ENCODE measurements at regions of chrX and their contacts with region 1.

Region 1: DNA sequence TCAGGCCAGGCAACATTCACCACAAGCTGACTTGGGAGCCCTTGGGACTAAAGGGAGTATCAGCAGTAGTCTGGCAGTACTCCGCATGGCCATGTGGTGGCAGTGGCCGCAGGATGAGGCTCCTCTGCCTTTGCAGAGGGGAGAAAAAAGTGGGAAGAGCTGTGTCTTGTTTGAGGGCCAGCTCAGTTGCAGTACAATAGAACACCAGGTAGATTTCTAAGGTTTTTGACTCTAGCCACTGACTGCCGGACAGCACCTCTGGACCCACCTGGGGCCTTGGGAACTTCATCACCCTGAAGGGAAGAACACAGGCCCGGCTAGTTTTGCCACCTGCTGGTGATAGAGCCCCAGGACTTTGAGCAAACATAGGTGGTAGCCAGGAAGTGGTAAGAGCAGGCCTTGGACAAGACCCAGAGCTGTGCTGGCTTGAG is 414.6 kb downstream of the OPHN1 start:
- DNase-seq: peak; percentile 21 to 65
- H3K4me3 ChIP-seq: no peak overlapping the region
- H3K27ac ChIP-seq: no peak overlapping the region
- H3K4me1 ChIP-seq: no peaks in the 10 kb centered on the region
- H3K27me3 ChIP-seq: no peaks in the 10 kb centered on the region
- CTCF ChIP-seq: peak; percentile 65 to 71 (median 68)
- EP300 ChIP-seq: no peak
- POLR2A ChIP-seq: no peak
- RAD21 ChIP-seq: peak; percentile 50 to 64

Region 2: DNA sequence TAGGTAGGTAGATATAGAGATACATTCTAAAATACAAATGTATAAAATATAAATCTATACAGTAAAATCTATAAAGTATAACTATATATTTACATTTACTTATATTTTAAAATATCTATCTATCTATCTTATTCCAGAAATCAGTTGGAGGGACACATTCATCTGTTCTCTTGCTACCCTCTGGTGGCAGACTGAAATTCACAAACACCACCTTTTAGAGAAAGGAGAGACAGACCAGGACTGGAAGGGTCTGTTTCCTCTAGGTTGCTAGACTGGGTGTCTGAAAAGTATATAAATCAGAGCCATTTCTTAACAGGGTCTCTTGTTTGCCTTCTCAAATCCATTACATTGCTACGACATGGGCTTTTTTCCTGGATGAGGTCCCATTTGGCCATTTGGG is 71.6 kb after region 1 on chrX:
- CTCF ChIA-PET with region 1: interaction called, 20 read pairs
- POLR2A ChIA-PET with region 1: no interaction called
- DNase-seq: no peak
- H3K4me3 ChIP-seq: no peak overlapping the region
- H3K27ac ChIP-seq: no peak overlapping the region
- H3K4me1 ChIP-seq: no peaks in the 10 kb centered on the region
- H3K27me3 ChIP-seq: no peaks in the 10 kb centered on the region
- CTCF ChIP-seq: peak in 1 of 3 experiments; percentile 6; a peak in 2 of 4 replicates
- EP300 ChIP-seq: no peak
- POLR2A ChIP-seq: no peak
- RAD21 ChIP-seq: peak; percentile 53 to 60